Activated CD4-positive, alpha-beta memory T cell treated with anti-CD3 and anti-CD28 coated beads, Interleukin-2, amount 10 ng/mL, durations not matched to agents 7 days and 5 days (primary cell): ENCODE measurements at regions of chr15 and their contacts with region 1.

Region 1: GRCh38 chr15:65304389-65305144 is at the start of gene RNU5B-1:
- DNase-seq: peak; percentile 86
- H3K4me3 Mint-ChIP-seq: peak within 1 kb of the TSS; percentile 94
- H3K27ac Mint-ChIP-seq: peak within 1 kb of the TSS; percentile 90
- H3K4me1 Mint-ChIP-seq: peaks cover 37% of the 10 kb centered on the region
- H3K27me3 Mint-ChIP-seq: peaks cover 2% of the 10 kb centered on the region
- total RNA-seq, gene RNU5B-1: 12.9 TPM in 1 of 2 experiments, not detected in the other

Region 2: GRCh38 chr15:64893481-64894394 is 410.8 kb before region 1 on chr15:
- CTCF ChIA-PET with region 1: no interaction called
- POLR2A ChIA-PET with region 1: interaction called, 22 read pairs
- DNase-seq: peak; percentile 98
- H3K4me3 Mint-ChIP-seq: peak overlapping the region; percentile 82
- H3K27ac Mint-ChIP-seq: peak overlapping the region; percentile 99
- H3K4me1 Mint-ChIP-seq: peaks cover 72% of the 10 kb centered on the region
- H3K27me3 Mint-ChIP-seq: no peaks in the 10 kb centered on the region

Region 3: GRCh38 chr15:65184868-65185738 is 119.5 kb before region 1 on chr15 and contains the start of gene CLPX:
- CTCF ChIA-PET with region 1: interaction called, 3 read pairs
- POLR2A ChIA-PET with region 1: interaction called, 60 read pairs
- DNase-seq: peak; percentile 91
- H3K4me3 Mint-ChIP-seq: peak within 1 kb of the TSS; percentile 90
- H3K27ac Mint-ChIP-seq: peak within 1 kb of the TSS; percentile 83
- H3K4me1 Mint-ChIP-seq: peaks cover 21% of the 10 kb centered on the region
- H3K27me3 Mint-ChIP-seq: peaks cover 2% of the 10 kb centered on the region
- total RNA-seq, gene CLPX: 48.5 to 57.8 TPM

Region 4: DNA sequence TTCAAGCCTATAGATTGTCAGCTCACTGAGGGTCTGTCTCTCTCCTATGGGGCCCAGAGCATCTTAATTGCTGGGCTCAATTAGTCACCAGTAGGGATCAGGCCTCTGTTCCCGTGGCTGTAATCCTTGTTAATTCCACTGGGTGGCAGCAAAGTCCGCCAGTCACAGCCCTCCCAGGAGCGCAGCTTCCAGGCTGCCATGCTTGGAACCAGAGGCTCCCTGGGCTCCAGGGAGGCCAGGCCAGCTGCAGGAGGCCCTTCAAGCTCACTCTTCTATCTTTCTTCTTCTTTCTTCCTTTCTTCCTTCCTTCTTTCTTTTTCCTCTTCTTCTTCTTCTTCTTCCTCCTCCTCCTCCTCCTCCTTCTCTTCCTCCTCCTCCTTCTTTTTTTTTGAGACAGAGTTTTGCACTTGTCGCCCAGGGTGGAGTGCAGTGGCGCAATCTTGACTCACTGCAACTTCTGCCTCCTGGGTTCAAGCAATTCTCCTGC is 14.3 kb after region 1 on chr15:
- CTCF ChIA-PET with region 1: interaction called, 8 read pairs
- POLR2A ChIA-PET with region 1: interaction called, 46 read pairs
- DNase-seq: peak; percentile 79
- H3K4me3 Mint-ChIP-seq: no peak overlapping the region
- H3K27ac Mint-ChIP-seq: no peak overlapping the region
- H3K4me1 Mint-ChIP-seq: no peaks in the 10 kb centered on the region
- H3K27me3 Mint-ChIP-seq: peaks cover 17% of the 10 kb centered on the region

Region 5: DNA sequence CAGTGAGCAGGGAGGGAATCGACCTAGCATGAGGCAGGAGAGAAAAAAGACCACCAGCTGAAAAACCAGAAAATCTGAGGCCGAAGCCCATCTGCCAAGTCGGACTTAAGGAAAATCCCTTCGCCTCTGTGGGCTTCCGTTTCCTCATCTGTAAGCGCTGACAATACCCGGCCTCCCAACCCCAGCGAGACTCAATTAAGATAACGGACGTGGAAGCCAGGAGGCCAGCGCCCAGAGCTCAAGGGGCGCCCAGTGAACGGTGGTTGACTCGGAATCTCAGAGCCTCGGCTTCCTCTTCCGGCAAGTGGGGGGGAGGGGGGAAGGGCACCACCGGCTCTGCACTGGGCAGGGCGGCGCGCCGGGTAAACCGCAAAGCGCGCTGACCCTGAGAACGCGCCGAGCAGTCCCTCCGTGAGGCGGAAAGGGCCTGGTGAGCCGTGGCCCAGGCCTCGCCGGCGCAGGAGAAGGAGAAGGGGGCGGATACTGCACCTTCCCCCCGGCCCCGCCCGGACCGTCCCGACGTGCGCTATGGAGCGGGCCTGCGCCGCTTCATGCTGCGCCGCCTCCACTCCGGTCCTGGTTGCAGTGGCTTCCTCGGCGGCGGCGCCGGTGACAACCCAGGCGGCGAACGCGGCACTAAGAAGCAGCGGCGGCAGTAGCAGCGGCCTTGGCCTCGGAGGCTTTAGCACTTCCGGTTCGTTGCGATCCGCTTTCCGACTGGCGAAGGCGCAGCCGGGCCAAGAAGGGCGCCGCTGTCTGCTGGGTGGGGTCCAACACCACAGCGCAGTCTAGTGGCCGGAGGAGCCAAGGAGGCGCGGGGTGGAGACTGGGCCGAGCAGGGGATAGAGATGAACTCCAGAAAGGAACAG is 212.7 kb after region 1 on chr15 and contains the start of gene DPP8:
- CTCF ChIA-PET with region 1: no interaction called
- POLR2A ChIA-PET with region 1: interaction called, 13 read pairs
- DNase-seq: peak; percentile 95
- H3K4me3 Mint-ChIP-seq: peak within 1 kb of the TSS; percentile 96
- H3K27ac Mint-ChIP-seq: peak within 1 kb of the TSS; percentile 95
- H3K4me1 Mint-ChIP-seq: peaks cover 40% of the 10 kb centered on the region
- H3K27me3 Mint-ChIP-seq: no peaks in the 10 kb centered on the region
- total RNA-seq, gene DPP8: 38.2 to 42.7 TPM

Region 6: DNA sequence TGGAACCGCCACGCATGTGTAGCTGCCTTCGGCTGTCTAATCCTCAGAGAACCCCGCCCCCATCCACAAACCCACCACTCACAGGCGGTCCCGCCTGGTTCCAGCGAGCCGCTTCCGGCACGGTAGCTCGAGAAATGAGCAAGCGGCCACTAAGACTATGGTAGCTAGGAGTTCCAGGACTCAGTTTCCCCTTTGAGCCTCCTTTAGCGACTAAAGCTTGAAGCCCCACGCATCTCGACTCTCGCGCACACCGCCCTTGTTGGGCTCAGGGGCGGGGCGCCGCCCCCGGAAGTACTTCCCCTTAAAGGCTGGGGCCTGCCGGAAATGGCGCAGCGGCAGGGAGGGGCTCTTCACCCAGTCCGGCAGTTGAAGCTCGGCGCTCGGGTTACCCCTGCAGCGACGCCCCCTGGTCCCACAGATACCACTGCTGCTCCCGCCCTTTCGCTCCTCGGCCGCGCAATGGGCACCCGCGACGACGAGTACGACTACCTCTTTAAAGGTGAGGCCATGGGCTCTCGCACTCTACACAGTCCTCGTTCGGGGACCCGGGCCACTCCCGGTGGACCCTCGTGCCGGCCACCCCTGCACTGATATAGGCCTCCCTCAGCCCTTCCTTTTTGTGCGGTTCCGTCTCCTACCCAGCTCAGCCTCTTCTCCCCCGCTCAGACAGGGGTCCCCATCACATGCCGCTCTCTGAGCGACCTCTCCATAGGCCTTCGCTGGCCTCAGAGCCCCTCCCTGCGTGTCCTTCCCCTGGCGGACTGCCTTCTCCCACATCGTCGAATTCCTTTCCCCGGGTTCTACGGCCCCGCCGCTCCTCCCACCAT is 564.8 kb after region 1 on chr15 and contains the start of gene RAB11A:
- CTCF ChIA-PET with region 1: no interaction called
- POLR2A ChIA-PET with region 1: interaction called, 19 read pairs
- DNase-seq: peak; percentile 95
- H3K4me3 Mint-ChIP-seq: peak within 1 kb of the TSS; percentile 100
- H3K27ac Mint-ChIP-seq: peak within 1 kb of the TSS; percentile 97
- H3K4me1 Mint-ChIP-seq: peaks cover 30% of the 10 kb centered on the region
- H3K27me3 Mint-ChIP-seq: peaks cover 2% of the 10 kb centered on the region
- total RNA-seq, gene RAB11A: 192 to 193 TPM

Region 7: DNA sequence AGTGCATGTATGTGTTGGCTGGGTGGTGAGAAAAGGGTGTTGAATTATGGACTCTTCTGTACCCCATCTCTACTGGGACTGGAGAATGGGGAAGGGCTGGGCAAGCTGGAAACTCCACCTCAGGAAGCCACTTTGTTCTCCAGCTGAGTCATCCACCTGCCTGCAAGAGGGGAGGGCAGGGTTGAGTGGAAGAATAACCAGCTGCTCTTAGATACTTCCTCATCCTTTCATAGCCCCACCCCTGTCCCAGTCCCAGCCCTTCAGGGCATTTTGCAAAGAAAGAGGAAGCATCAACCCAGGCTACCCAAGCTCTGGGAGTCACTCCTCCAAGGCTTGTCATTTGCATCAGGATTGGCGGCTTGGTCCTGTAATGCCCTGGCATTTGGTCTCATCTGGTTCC is 597.8 kb after region 1 on chr15:
- CTCF ChIA-PET with region 1: no interaction called
- POLR2A ChIA-PET with region 1: no interaction called
- DNase-seq: no peak
- H3K4me3 Mint-ChIP-seq: no peak overlapping the region
- H3K27ac Mint-ChIP-seq: no peak overlapping the region
- H3K4me1 Mint-ChIP-seq: peaks cover 19% of the 10 kb centered on the region
- H3K27me3 Mint-ChIP-seq: no peaks in the 10 kb centered on the region